Activated T-helper 2 cell treated with anti-CD3 and anti-CD28 coated beads, Interferon-gamma antibody, Interleukin-2, Interleukin-4, amounts not matched to agents 10 μg/mL and 5 μg/mL and 100 μg/mL, durations not matched to agents 14 hours and 24 hours and 36 hours (primary cell): ENCODE measurements at regions of chr6 and their contacts with region 1.

Region 1: DNA sequence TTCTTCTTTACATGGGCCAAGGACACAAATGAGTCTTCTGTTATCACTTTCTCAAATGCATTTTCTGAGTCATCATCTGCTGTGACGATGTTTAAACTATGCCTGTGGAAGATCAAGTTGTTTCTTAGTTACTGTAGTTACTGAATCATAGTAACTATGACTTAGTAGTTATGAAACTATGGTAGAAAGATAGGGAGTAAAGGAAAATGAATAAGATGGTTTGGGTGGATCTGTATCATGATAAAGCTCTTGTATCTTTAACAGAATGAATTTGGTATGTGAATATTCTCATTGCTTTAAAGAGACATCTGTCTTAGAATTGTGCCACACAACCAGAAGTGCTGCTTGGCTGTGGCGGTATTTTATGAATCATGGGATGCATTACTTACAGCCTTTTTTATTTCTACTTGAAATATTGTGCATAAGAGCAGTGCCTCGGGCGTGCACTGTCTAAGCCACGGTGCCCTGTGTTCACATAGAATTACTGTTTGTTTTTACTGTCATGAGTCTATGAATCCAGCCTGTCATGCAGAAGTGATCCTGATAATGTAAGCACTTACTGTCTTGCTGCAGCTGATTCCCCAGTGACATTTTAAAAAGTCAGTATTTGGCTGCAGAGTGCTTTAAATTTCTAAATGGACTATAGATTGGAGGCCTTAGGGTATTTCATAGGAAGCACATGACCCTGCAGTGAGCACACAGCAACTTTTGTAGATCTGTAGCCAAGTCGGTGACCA is 215.2 kb downstream of the TMEM242 start:
- DNase-seq: no peak
- H3K4me3 Mint-ChIP-seq: peak overlapping the region; percentile 0
- H3K27ac Mint-ChIP-seq: peak overlapping the region; percentile 81
- H3K4me1 Mint-ChIP-seq: peaks cover 56% of the 10 kb centered on the region
- H3K27me3 Mint-ChIP-seq: no peaks in the 10 kb centered on the region

Region 2: GRCh38 chr6:156852132-156852857 is 255.8 kb before region 1 on chr6:
- intact Hi-C with region 1: loop called (anchors 10 kb)
- DNase-seq: no peak
- H3K4me3 Mint-ChIP-seq: no peak overlapping the region
- H3K27ac Mint-ChIP-seq: no peak overlapping the region
- H3K4me1 Mint-ChIP-seq: peaks cover 35% of the 10 kb centered on the region
- H3K27me3 Mint-ChIP-seq: no peaks in the 10 kb centered on the region

Region 3: GRCh38 chr6:157068691-157069324 is 39.3 kb before region 1 on chr6:
- intact Hi-C with region 1: loop called (anchors 1 kb)
- DNase-seq: no peak
- H3K4me3 Mint-ChIP-seq: no peak overlapping the region
- H3K27ac Mint-ChIP-seq: peak overlapping the region; percentile 58
- H3K4me1 Mint-ChIP-seq: peaks cover 54% of the 10 kb centered on the region
- H3K27me3 Mint-ChIP-seq: no peaks in the 10 kb centered on the region

Region 4: GRCh38 chr6:157075549-157076450 is 32.3 kb before region 1 on chr6:
- intact Hi-C with region 1: loop called (anchors 1 kb)
- DNase-seq: no peak
- H3K4me3 Mint-ChIP-seq: peak overlapping the region; percentile 43
- H3K27ac Mint-ChIP-seq: peak overlapping the region; percentile 90
- H3K4me1 Mint-ChIP-seq: peaks cover 46% of the 10 kb centered on the region
- H3K27me3 Mint-ChIP-seq: no peaks in the 10 kb centered on the region

Region 5: GRCh38 chr6:157089258-157089657 is 18.8 kb before region 1 on chr6:
- intact Hi-C with region 1: no loop called
- DNase-seq: no peak
- H3K4me3 Mint-ChIP-seq: no peak overlapping the region
- H3K27ac Mint-ChIP-seq: no peak overlapping the region
- H3K4me1 Mint-ChIP-seq: peaks cover 22% of the 10 kb centered on the region
- H3K27me3 Mint-ChIP-seq: no peaks in the 10 kb centered on the region

Region 6: DNA sequence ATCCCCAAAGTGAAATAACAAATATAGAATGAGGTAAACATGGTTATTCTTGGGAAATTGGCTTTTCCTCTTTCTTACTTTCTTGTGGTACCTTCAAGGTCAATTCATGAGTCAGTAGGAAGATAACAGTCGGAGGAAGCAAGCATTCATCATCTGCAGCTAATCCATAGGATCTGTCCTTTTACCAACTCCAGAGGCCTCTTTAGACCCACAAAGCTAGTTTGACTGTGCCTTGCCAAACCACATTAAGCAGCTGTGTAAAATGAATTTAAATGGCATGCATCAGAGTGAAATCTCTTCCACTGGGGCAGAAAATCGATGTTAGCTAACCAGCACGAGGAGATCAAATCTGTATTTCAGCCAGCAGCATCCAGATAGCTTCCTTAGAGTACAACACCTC is 43.9 kb after region 1 on chr6:
- intact Hi-C with region 1: loop called (anchors 1 kb)
- DNase-seq: no peak
- H3K4me3 Mint-ChIP-seq: no peak overlapping the region
- H3K27ac Mint-ChIP-seq: peak overlapping the region; percentile 55
- H3K4me1 Mint-ChIP-seq: peaks cover 22% of the 10 kb centered on the region
- H3K27me3 Mint-ChIP-seq: no peaks in the 10 kb centered on the region